ENCODE measurements at regions of chr3 and their contacts with region 1.

Region 1: GRCh38 chr3:150114873-150115540 is 144.3 kb upstream of the PFN2 start:
- DNase-seq: no peak
- H3K4me3 Mint-ChIP-seq: no peak overlapping the region
- H3K27ac Mint-ChIP-seq: no peak overlapping the region
- H3K4me1 Mint-ChIP-seq: peaks cover 5% of the 10 kb centered on the region
- H3K27me3 Mint-ChIP-seq: peaks cover 17% of the 10 kb centered on the region

Region 2: GRCh38 chr3:150038830-150039229 is 76.2 kb before region 1 on chr3:
- CTCF ChIA-PET with region 1: no interaction called
- intact Hi-C with region 1: no loop called
- DNase-seq: no peak
- H3K4me3 Mint-ChIP-seq: no peak overlapping the region
- H3K27ac Mint-ChIP-seq: no peak overlapping the region
- H3K4me1 Mint-ChIP-seq: no peaks in the 10 kb centered on the region
- H3K27me3 Mint-ChIP-seq: peaks cover 10% of the 10 kb centered on the region

Region 3: DNA sequence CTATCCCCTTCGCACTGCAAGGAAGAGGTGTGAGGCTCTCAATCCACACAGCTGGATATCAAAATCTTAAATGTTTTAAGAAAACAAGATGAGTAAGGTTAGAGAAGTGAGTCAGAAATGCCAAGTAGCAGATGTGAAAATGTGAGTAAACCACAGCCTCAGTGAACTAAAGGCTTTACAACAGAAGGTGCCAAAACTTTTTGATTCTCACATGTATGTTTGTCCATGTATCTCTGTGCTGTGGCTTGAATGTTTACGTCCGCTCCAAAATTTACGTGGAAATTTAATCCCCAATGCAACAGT is 17.5 kb before region 1 on chr3:
- CTCF ChIA-PET with region 1: no interaction called
- intact Hi-C with region 1: loop called (anchors 1 kb)
- DNase-seq: no peak
- H3K4me3 Mint-ChIP-seq: no peak overlapping the region
- H3K27ac Mint-ChIP-seq: no peak overlapping the region
- H3K4me1 Mint-ChIP-seq: peaks cover 6% of the 10 kb centered on the region
- H3K27me3 Mint-ChIP-seq: peaks cover 15% of the 10 kb centered on the region

Measured in activated naive CD4-positive, alpha-beta T cell treated with anti-CD3 and anti-CD28 coated beads for 36 hours (primary cell).